Activated T-helper 2 cell treated with anti-CD3 and anti-CD28 coated beads, Interferon-gamma antibody, Interleukin-2, Interleukin-4, amounts not matched to agents 10 μg/mL and 5 μg/mL and 100 μg/mL, durations not matched to agents 14 hours and 24 hours and 36 hours (primary cell): ENCODE measurements at regions of chr6 and their contacts with region 1.

Region 1: DNA sequence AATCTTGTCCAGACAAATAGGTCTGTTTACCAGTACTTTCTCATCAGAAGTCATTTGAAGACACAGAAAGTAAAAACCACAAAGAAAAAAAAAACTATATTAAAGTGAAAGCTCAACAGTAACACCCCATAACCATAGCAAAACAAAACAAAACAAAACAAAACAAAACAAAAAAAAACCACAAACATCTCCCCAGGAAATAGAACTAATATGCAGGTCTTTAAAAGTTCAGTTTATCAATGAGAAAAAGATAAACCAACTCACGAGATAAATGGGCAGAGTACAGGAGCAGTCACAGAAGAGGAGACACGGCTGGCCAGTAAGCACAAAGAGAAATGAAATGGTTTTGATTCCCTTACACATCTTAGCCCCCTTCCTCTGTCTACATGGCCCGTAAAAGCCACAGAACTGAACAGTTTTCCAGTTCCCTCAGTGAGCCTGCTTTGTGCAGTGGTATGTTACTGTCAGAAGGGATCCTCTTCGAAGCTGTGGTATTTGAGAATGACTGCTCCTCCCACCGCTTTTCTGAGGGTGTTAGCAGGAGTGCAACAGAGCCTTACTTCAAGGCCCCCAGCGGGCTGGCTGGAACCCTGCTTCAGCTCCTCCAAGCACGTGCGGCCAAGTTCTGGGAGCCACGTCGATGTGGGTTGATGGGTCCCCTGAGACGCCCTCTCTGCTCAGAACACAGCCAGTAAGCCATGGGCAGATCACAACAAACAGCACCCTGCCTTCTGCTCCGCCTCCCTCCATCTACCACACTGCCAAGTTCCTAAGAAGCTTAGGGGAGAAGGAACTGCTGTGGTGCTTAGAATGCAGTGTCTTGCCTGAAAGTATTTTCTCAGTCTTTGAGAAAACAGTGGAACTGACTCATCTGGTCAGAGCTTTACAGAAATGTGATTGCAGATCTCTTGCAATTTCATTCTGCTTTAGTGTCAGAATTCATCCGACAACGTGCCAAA is 14.0 kb downstream of the UST start:
- DNase-seq: peak; percentile 40
- H3K4me3 Mint-ChIP-seq: peak overlapping the region; percentile 73
- H3K27ac Mint-ChIP-seq: peak overlapping the region; percentile 81
- H3K4me1 Mint-ChIP-seq: peaks cover 53% of the 10 kb centered on the region
- H3K27me3 Mint-ChIP-seq: peaks cover 53% of the 10 kb centered on the region

Region 2: DNA sequence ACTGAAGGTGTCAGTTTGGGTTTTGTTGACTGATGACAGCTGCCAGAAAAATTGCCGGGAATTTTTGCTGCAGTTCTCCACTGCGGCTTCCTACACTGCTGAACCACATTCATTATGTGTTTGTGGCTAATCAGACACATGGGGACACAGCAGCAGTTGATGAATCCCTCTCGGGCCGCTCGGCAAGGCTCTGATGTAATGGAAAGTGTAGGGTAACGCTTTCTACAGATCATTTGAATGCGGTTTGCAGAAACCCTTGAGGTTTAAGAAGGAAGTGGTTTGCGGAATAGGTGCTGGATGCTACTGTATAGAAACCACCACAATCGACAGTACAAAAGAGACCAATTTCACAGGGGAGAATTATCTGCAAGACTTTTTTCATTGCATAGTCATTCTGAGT is 556.9 kb before region 1 on chr6:
- intact Hi-C with region 1: loop called (anchors 2 kb)
- DNase-seq: peak; percentile 74
- H3K4me3 Mint-ChIP-seq: no peak overlapping the region
- H3K27ac Mint-ChIP-seq: peak overlapping the region; percentile 58
- H3K4me1 Mint-ChIP-seq: peaks cover 22% of the 10 kb centered on the region
- H3K27me3 Mint-ChIP-seq: peaks cover 74% of the 10 kb centered on the region

Region 3: DNA sequence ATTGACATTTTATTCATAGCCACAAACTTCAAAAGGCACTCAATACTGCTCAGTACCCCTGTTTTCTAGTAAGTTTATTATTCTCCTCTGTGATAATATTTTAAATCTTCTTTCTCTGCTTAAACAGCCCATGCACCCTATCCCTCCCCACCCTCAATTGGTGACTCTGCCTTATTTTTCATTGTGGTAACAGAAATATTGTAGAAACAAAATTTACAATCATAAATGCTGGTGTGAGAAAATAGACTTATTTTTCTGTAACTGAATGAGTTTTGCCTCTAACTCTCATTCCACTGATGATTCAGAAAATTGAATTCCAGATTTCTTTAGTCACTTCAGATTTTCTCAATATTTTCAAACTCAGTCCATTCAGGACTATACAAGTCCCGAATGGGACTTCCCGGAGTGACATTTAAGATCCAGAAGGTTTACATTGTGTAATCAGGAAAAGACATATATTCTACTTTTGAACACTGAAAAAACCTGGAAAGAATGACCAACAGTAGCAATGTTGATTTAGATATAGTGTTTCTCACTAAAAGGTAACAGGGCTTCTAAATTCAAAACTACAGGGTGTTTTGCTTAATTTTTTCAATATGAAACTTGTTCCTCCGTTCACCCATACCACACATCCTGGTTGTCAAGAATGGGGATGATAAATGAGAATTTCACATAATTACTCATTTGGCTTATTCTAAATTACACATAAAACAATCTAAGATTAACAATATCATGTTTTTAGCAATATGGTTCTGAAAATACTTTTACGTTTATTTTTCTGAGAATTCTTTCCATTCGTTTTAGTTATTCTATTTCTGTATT is 48.8 kb before region 1 on chr6:
- intact Hi-C with region 1: loop called (anchors 1 kb)
- DNase-seq: no peak
- H3K4me3 Mint-ChIP-seq: no peak overlapping the region
- H3K27ac Mint-ChIP-seq: peak overlapping the region; percentile 60
- H3K4me1 Mint-ChIP-seq: peaks cover 10% of the 10 kb centered on the region
- H3K27me3 Mint-ChIP-seq: peaks cover 2% of the 10 kb centered on the region

Region 4: GRCh38 chr6:148746363-148747144 is 14.3 kb before region 1 on chr6 and contains the start of gene UST:
- intact Hi-C with region 1: loop called (anchors 1 kb)
- DNase-seq: peak; percentile 37
- H3K4me3 Mint-ChIP-seq: peak within 1 kb of the TSS; percentile 90
- H3K27ac Mint-ChIP-seq: peak within 1 kb of the TSS; percentile 46
- H3K4me1 Mint-ChIP-seq: peaks cover 13% of the 10 kb centered on the region
- H3K27me3 Mint-ChIP-seq: peaks cover 78% of the 10 kb centered on the region
- total RNA-seq, gene UST: 0.92 and 1.3 TPM in 2 replicates

Region 5: DNA sequence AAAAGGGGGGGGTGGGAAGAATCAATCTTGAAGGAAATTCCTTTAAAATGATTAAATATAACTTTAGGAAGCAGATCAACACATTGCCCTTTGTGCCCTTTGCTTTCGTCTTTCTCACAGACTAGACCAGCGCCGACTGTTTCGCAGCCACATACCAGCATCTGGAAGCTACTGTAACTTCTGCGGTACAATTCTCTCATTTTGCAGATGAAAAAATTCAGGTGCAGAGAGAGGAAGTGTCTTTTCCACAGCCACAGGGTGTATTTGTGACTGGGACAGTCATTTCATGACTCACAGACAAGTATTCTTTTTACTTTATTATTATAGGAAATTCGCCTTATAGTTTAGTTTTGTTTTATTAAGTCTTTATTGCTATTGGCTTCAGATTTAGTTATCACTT is 70.2 kb after region 1 on chr6:
- intact Hi-C with region 1: loop called (anchors 5 kb)
- DNase-seq: no peak
- H3K4me3 Mint-ChIP-seq: no peak overlapping the region
- H3K27ac Mint-ChIP-seq: no peak overlapping the region
- H3K4me1 Mint-ChIP-seq: peaks cover 10% of the 10 kb centered on the region
- H3K27me3 Mint-ChIP-seq: peaks cover 10% of the 10 kb centered on the region

Region 6: DNA sequence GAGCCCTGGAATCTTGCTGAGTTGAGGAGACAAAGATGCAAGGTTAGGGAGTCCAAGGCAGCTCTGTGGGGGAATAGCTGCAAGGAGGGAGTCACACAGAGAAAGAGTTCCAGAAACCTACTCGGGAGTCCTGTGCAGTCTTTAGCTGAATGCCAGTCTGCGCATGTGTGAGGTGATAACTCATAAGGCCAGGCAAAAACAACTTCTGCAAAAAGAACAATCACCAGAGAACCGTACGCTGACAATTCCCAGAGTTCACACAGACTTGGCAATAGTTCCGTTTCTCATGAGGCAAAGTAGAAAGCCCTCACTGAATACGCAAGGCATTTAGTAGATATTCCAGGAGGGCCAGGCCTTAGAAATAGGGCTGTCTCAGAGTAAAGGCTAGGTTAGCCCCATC is 421.4 kb after region 1 on chr6:
- intact Hi-C with region 1: no loop called
- DNase-seq: no peak
- H3K4me3 Mint-ChIP-seq: no peak overlapping the region
- H3K27ac Mint-ChIP-seq: no peak overlapping the region
- H3K4me1 Mint-ChIP-seq: peaks cover 14% of the 10 kb centered on the region
- H3K27me3 Mint-ChIP-seq: no peaks in the 10 kb centered on the region

Region 7: GRCh38 chr6:149499066-149499465 is 738.2 kb after region 1 on chr6:
- intact Hi-C with region 1: loop called (anchors 5 kb)
- DNase-seq: no peak
- H3K4me3 Mint-ChIP-seq: no peak overlapping the region
- H3K27ac Mint-ChIP-seq: peak overlapping the region; percentile 33
- H3K4me1 Mint-ChIP-seq: peaks cover 48% of the 10 kb centered on the region
- H3K27me3 Mint-ChIP-seq: no peaks in the 10 kb centered on the region